ENCODE measurements at regions of chr4 and their contacts with region 1.

Region 1: GRCh38 chr4:89024051-89024675 is 32.8 kb downstream of the FAM13A start:
- DNase-seq: no peak
- ATAC-seq: peak; percentile 96
- H3K4me3 Mint-ChIP-seq: no peak overlapping the region
- H3K27ac Mint-ChIP-seq: no peak overlapping the region
- H3K4me1 Mint-ChIP-seq: no peaks in the 10 kb centered on the region
- H3K27me3 Mint-ChIP-seq: no peaks in the 10 kb centered on the region
- CTCF ChIP-seq: peak; percentile 62

Region 2: GRCh38 chr4:88659055-88659889 is 364.9 kb before region 1 on chr4:
- CTCF ChIA-PET with region 1: no interaction called
- POLR2A ChIA-PET with region 1: no interaction called
- DNase-seq: peak; percentile 32
- ATAC-seq: peak; percentile 99
- H3K4me3 Mint-ChIP-seq: no peak overlapping the region
- H3K27ac Mint-ChIP-seq: no peak overlapping the region; the same call in 1 of the 2 replicates
- H3K4me1 Mint-ChIP-seq: peaks cover 19% of the 10 kb centered on the region
- H3K27me3 Mint-ChIP-seq: no peaks in the 10 kb centered on the region
- CTCF ChIP-seq: peak; percentile 43; the same call in 1 of the 2 replicates

Region 3: GRCh38 chr4:88818631-88819470 is 205.3 kb before region 1 on chr4:
- CTCF ChIA-PET with region 1: interaction called, 38 read pairs
- POLR2A ChIA-PET with region 1: no interaction called
- DNase-seq: peak; percentile 55
- ATAC-seq: peak; percentile 34
- H3K4me3 Mint-ChIP-seq: no peak overlapping the region
- H3K27ac Mint-ChIP-seq: no peak overlapping the region; the same call in 1 of the 2 replicates
- H3K4me1 Mint-ChIP-seq: peaks cover 40% of the 10 kb centered on the region
- H3K27me3 Mint-ChIP-seq: no peaks in the 10 kb centered on the region
- CTCF ChIP-seq: peak; percentile 35; the same call in 1 of the 2 replicates